Left ventricle myocardium superior (tissue), 1 donor: ENCODE measurements at regions of chr1 and their contacts with region 1.

Region 1: GRCh38 chr1:156096640-156097391 is 14.6 kb upstream of the MEX3A start:
- DNase-seq: peak; percentile 95
- ATAC-seq: peak; percentile 97

Region 2: DNA sequence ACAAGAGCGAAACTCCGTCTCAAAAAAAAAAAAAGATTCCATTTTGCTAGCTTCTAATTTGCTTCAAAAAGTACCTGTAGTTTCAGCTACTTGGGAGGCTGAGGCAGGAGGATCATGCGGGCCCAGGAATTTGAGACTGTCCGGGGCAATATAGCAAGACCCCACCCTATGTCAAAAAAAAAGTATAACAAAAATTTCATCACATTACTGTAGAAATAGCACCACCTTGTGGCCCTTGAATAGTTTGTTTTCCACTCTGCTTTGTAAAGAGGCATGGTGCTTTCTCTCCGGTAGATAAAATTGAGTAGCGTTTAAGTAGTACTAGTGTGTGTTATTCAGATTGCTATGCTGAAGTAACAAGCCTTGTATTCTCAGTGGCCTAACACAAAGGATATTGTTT is 505.0 kb before region 1 on chr1:
- intact Hi-C with region 1: no loop called
- DNase-seq: no peak
- ATAC-seq: peak; percentile 69

Region 3: GRCh38 chr1:156129706-156130581 is 33.1 kb after region 1 on chr1:
- intact Hi-C with region 1: loop called (anchors 2 kb)
- DNase-seq: peak; percentile 87
- ATAC-seq: peak; percentile 56